Breast epithelium (tissue), 4 donors: ENCODE measurements at regions of chr13 and their contacts with region 1.

Region 1: DNA sequence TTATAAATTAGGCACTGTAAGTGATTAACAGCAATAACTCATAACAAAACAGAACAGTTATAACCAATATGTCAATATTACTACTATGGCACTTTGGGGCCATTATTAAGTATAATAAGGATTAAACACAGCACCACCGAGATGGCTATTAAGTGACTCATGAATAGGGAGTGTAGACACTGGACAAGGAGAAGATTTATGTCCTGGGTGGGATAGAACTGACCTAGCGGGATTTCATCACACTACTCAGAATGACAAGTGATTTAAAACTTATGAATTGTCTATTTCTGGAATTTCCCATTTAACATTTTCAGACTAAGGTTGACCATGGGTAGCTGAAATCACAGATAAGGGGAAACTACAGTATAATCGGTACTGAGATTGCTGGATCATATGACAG is 79.0 kb upstream of the SLC7A1 start:
- DNase-seq: no peak
- H3K4me3 ChIP-seq: no peak overlapping the region
- H3K27ac ChIP-seq: no peak overlapping the region
- H3K4me1 ChIP-seq: no peaks in the 10 kb centered on the region
- H3K27me3 ChIP-seq: no peaks in the 10 kb centered on the region
- CTCF ChIP-seq: no peak
- POLR2A ChIP-seq: no peak

Region 2: DNA sequence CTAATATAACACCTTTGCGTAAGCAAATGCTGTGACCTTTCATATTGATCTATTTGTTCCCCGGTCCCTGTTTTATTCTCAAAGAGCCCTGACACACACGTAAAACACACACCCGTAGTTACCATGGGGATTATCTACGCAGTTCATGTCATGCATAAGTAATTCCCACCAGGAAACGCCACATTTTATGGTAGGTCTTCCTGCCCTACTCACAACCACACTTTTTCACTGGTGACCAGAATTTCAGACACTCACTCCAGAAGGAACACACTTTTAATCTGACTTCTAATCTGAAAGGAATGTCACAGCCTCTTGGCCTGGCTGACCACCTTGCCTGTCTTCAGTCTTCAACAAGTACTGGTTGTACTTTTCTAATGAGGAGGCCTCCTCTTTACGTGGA is 125.8 kb before region 1 on chr13:
- intact Hi-C with region 1: no loop called
- DNase-seq: no peak
- H3K4me3 ChIP-seq: no peak overlapping the region
- H3K27ac ChIP-seq: no peak overlapping the region
- H3K4me1 ChIP-seq: no peaks in the 10 kb centered on the region
- H3K27me3 ChIP-seq: no peaks in the 10 kb centered on the region
- CTCF ChIP-seq: no peak
- POLR2A ChIP-seq: no peak

Region 3: DNA sequence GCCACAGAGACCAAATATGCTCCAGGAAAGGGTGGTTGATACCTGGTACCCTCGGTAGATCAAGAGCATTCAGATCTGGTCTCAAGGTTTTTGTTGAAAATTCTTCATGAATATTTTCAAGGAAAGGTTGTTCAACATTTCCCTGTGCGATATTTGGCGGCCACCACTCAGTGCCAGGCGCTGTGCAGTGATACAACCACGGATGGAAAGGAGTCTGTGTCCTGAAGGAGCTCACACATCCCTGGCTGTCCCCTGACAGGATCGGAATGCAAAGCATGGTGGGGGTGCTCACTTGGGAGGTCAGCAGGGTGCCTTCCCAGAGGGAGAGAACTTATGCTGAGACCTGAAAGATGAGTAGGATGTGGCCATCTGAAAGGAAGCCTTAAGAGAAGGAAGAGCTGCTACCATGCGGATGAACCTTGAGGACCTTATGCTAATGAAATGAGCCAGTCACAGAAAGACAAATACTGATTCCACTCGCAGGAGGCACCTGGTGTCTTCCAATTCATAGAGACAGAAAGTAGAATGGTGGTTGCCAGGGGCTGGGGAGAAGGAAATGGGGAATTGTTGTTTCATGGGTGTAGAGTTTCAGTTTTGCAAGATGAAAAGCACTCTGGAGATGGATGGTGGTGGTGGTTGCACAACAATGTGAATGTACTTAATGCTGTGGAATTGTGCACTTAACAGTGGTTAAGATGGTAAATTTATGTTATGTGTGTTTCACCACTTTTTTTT is 1445.6 kb after region 1 on chr13:
- intact Hi-C with region 1: loop called (anchors 5 kb)
- DNase-seq: no peak
- H3K4me3 ChIP-seq: no peak overlapping the region
- H3K27ac ChIP-seq: no peak overlapping the region
- H3K4me1 ChIP-seq: no peaks in the 10 kb centered on the region
- H3K27me3 ChIP-seq: no peaks in the 10 kb centered on the region
- CTCF ChIP-seq: no peak
- POLR2A ChIP-seq: no peak